PC-3 (cell line): ENCODE measurements at regions of chr18 and their contacts with region 1.

Region 1: DNA sequence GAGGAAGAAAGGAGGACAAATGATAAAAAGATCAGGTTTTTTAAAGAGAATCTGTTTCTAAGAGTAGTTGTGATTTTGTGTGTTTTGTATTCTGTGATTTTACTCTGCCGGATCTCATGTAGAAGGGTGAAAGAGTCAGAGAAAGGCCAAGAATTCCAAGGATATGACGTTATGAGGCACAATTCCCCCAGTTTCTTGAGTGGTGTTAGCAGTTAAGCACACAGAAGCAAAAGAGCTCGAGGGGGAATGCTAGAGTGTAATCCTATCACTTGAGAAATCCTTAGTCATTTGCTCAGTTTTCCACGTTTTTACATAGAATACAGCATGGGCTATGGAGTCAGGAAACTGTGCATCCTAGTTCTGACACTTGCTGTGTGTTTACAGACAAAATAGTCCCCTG is 34.8 kb downstream of the METTL4 start:
- DNase-seq: peak; percentile 18
- ATAC-seq: peak; percentile 24; the same call in 1 of the 2 replicates
- H3K4me3 ChIP-seq: no peak overlapping the region
- H3K27ac ChIP-seq: no peak overlapping the region
- H3K4me1 ChIP-seq: peaks cover 16% of the 10 kb centered on the region; the same call in 1 of the 2 replicates
- H3K27me3 ChIP-seq: no peaks in the 10 kb centered on the region
- CTCF ChIP-seq: no peak

Region 2: DNA sequence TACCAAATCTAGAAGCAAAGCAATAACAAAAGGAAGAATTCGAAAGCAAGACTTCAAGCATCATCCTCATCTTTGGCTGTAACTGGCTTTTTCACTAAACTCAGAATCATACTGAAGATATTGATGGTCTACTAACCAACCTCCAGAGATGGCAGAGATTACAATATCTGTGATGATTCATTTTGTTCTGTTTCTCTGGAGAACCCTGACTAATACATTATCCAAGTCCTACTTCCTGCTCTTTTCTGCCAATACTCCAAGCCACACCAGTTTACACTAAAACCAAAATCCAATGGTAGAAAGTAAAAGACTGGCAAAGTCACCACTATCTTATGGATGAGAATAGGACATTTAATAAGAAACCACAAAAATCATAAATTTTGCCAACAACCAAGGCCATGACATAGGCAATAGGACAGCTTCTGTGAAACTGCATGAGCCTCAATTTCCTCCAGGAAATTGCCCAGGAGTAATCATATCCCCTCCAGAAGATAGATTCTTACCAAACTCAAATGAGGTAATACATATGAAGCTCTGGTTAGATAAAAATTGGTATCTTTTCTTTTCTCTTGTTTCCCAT is 125.0 kb before region 1 on chr18:
- CTCF ChIA-PET with region 1: no interaction called
- POLR2A ChIA-PET with region 1: no interaction called
- intact Hi-C with region 1: loop called (anchors 5 kb)
- DNase-seq: peak; percentile 89
- ATAC-seq: peak; percentile 89
- H3K4me3 ChIP-seq: peak overlapping the region; percentile 38; the same call in 1 of the 2 replicates
- H3K27ac ChIP-seq: peak overlapping the region; percentile 91
- H3K4me1 ChIP-seq: peaks cover 43% of the 10 kb centered on the region
- H3K27me3 ChIP-seq: no peaks in the 10 kb centered on the region
- CTCF ChIP-seq: no peak

Region 3: DNA sequence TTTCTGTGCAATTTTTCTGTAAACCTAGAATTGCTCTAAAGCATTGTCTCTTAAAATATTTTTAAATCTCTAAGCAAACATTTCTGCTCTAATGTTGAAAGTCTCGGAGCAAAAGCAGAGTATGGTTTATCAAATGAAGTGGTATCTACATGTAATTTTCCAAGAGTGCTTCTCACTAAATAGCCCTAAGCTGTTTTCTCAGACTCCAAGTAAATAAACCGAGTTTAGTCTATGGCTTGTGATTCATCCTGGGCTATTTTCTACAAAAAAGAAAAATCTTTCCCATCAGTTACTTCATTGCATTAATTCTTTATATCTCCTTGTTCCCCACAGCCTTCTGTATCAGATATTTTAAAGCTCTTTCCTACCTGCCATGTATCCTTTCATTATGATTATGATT is 55.9 kb before region 1 on chr18:
- CTCF ChIA-PET with region 1: no interaction called
- POLR2A ChIA-PET with region 1: no interaction called
- intact Hi-C with region 1: loop called (anchors 5 kb)
- DNase-seq: peak; percentile 68
- ATAC-seq: peak; percentile 98
- H3K4me3 ChIP-seq: no peak overlapping the region
- H3K27ac ChIP-seq: peak overlapping the region; percentile 27; the same call in 1 of the 2 replicates
- H3K4me1 ChIP-seq: peaks cover 12% of the 10 kb centered on the region
- H3K27me3 ChIP-seq: no peaks in the 10 kb centered on the region
- CTCF ChIP-seq: no peak